ENCODE measurements at regions of chr1 and their contacts with region 1.

Region 1: GRCh38 chr1:44568135-44568900 is 106.0 kb downstream of the TMEM53 start:
- DNase-seq: peak; percentile 23
- H3K4me3 ChIP-seq: no peak overlapping the region
- H3K27ac ChIP-seq: no peak overlapping the region
- H3K4me1 ChIP-seq: peaks cover 9% of the 10 kb centered on the region
- H3K27me3 ChIP-seq: peaks cover 2% of the 10 kb centered on the region
- CTCF ChIP-seq: no peak

Region 2: DNA sequence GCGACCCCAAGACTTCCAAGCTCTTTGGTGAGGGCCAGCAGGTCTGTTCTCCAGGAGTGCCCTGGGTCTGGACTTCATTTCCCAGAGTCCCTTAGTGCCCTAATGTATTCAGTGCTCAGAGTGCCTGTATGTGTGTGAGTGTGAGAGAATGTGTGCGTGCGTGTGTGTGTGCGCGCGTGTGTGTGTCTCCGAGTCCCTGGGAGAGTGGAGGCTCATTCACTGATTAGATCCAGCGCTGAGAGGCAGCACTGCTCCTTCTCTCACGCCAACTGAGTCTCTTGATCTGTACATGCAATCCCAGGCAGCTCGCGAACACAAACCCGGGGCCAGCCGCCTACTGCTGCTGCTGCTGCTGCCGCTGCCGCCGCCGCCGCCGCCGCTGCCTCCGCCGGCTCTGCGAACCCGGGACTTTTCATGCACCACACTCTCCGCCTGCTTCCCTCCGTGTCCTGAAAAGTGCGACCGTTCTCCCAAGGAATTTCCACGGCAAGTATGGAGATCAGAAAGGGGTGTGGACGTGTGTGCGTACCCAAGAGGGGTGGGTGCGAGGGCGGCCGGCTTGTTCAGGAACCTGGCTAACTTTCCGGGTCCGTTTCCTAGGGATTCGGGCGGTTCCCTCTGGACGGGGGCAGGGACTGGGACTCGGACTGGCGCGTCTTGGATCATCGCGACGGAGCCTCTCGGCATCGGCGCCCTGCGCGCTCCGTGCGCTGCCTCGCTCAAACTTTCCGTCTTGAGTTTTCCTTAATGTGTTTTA is 163.1 kb before region 1 on chr1 and contains the start of gene RNF220:
- CTCF ChIA-PET with region 1: interaction called, 20 read pairs
- dilution Hi-C with region 1: no loop called
- in situ Hi-C with region 1: no loop called
- intact Hi-C with region 1: no loop called
- DNase-seq: peak; percentile 43
- H3K4me3 ChIP-seq: peak within 1 kb of the TSS; percentile 42 to 61 (median 56)
- H3K27ac ChIP-seq: no peak within 1 kb of the TSS
- H3K4me1 ChIP-seq: peaks cover 17% of the 10 kb centered on the region
- H3K27me3 ChIP-seq: peaks cover 39% of the 10 kb centered on the region
- CTCF ChIP-seq: peak in 1 of 2 donors; percentile 26
- total RNA-seq, gene RNF220: 56.4 to 62.8 TPM

Region 3: DNA sequence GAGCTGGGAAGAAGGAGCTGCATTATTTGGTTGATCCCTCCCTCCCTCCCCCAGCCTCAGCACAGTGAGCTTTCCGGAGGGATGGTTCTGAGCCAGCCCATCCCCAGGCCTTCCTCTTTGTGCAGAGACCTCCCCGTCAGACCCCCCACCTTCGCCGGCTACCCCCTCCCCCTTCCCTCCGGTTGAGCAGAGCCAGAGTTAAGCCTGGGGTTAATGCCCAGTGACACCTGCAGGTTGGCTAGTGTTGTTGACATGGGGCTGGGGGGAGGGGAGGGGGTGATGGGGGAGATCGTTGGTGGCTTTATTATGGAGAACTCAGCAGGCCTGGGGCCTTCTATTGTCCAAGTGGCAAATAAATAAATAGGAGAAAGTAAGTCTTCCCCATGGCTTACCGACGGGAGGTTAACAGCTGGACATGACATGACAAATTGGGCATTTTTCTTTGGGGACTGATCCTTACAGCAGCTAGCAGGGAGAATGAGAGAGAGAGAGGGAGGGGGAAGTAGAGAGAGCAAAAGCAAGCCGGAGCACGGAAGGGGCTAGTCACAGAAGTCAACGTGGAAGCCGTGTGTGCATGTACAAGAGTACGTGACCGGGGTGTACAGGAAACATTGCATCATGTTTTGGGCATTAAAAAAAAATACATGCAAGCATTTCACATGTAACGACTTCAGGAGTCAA is 25.1 kb before region 1 on chr1:
- CTCF ChIA-PET with region 1: no interaction called
- dilution Hi-C with region 1: no loop called
- in situ Hi-C with region 1: no loop called
- intact Hi-C with region 1: no loop called
- DNase-seq: no peak
- H3K4me3 ChIP-seq: no peak overlapping the region
- H3K27ac ChIP-seq: no peak overlapping the region
- H3K4me1 ChIP-seq: peaks cover 15% of the 10 kb centered on the region
- H3K27me3 ChIP-seq: no peaks in the 10 kb centered on the region
- CTCF ChIP-seq: no peak

Region 4: GRCh38 chr1:44587796-44588460 is 19.6 kb after region 1 on chr1:
- CTCF ChIA-PET with region 1: interaction called, 10 read pairs
- dilution Hi-C with region 1: no loop called
- in situ Hi-C with region 1: no loop called
- intact Hi-C with region 1: no loop called
- DNase-seq: peak; percentile 2
- H3K4me3 ChIP-seq: no peak overlapping the region
- H3K27ac ChIP-seq: no peak overlapping the region
- H3K4me1 ChIP-seq: peaks cover 5% of the 10 kb centered on the region
- H3K27me3 ChIP-seq: no peaks in the 10 kb centered on the region
- CTCF ChIP-seq: no peak

Measured in mammary epithelial cell (primary cell).